Common myeloid progenitor, CD34-positive (primary cell): ENCODE measurements at regions of chr1 and their contacts with region 1.

Region 1: DNA sequence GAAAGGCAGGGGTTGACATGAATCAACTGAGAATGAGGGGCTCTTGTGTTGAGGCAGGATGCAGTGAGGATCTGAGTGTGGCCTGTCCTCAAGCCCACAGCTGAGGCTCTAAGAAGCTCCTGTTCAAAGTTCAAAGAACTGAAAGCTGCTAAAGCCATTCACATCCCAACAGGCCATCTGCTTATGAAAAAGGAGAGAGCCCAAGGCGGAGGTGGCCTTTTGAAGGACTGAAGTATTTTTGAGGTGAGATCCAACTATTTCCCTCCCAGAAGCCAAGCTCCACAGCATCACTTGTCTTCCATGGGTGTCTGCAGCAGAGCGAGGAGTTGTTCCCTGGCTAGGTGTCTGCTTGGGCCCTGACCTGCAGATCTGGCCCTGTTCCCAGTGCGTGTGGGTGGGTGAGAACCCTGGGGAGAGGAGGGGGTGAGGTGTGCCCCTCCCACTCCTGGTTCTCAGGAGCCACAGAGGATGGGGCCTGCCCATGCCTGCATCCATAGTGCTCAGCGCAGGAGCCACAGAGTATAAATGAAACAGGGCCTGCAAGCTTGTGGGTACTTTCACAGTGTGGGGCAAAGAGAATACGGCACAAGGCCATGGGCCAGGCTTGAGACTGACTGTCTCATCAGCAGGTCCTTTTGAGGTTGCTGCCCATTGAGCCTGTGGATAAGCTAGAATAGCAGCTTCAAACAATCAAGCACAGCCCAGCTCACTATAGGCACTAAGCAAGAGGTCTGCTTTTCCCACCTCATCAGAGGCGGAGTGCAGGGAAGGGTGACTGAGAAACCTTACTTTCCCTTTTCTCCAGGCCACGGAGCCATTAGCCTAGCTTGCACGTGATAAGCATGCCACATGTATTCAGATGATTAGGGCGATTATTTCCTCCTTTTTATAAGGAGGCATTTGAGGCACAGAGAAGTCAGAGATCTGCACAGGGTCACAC is 15.7 kb downstream of the REG4 start:
- DNase-seq: no peak
- H3K4me3 ChIP-seq: no peak overlapping the region
- H3K27ac ChIP-seq: no peak overlapping the region
- H3K4me1 ChIP-seq: peaks cover 0 to 4% (median 0%) of the 10 kb centered on the region in 4 experiments
- H3K27me3 ChIP-seq: no peaks in the 10 kb centered on the region

Region 2: GRCh38 chr1:119808972-119809550 is 13.5 kb after region 1 on chr1:
- CTCF ChIA-PET with region 1: interaction called, 16 read pairs
- POLR2A ChIA-PET with region 1: no interaction called
- DNase-seq: peak; percentile 67 to 83 (median 81)
- H3K4me3 ChIP-seq: peak overlapping the region in 1 of 7 experiments; percentile 35
- H3K27ac ChIP-seq: no peak overlapping the region
- H3K4me1 ChIP-seq: peaks cover 0 to 3% (median 0%) of the 10 kb centered on the region in 4 experiments
- H3K27me3 ChIP-seq: peaks cover 0 to 5% (median 0%) of the 10 kb centered on the region in 5 experiments